ENCODE measurements at regions of chr2 and their contacts with region 1.

Region 1: GRCh38 chr2:44927985-44928482 is 13.5 kb upstream of the SIX3 start:
- DNase-seq: no peak
- ATAC-seq: no peak
- H3K4me3 Mint-ChIP-seq: no peak overlapping the region
- H3K27ac Mint-ChIP-seq: no peak overlapping the region
- H3K4me1 Mint-ChIP-seq: peaks cover 17% of the 10 kb centered on the region
- H3K27me3 Mint-ChIP-seq: peaks cover 72% of the 10 kb centered on the region

Region 2: DNA sequence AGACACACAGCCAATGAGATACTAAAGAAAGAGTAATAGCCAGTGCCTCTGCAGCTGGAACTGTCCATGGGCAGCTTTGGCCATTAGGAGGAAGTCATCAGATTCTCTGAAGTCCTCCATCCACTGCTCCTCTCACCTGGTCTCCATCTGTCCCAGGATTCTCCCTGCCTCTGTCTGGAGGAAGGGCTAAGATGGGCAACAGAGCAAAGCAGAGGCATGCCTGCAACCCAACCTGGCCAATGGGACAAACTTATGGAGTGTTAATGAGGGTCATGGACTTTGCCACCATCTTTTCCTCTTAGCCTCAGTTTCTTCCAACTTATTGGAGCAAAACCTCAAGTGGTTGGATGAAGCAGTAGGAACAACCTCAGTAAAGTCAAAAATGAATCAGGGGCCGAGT is 78.0 kb before region 1 on chr2:
- CTCF ChIA-PET with region 1: no interaction called
- POLR2A ChIA-PET with region 1: no interaction called
- intact Hi-C with region 1: no loop called
- DNase-seq: no peak
- ATAC-seq: no peak
- H3K4me3 Mint-ChIP-seq: no peak overlapping the region
- H3K27ac Mint-ChIP-seq: no peak overlapping the region
- H3K4me1 Mint-ChIP-seq: peaks cover 3% of the 10 kb centered on the region
- H3K27me3 Mint-ChIP-seq: peaks cover 47% of the 10 kb centered on the region

Region 3: GRCh38 chr2:44941551-44942234 is 13.7 kb after region 1 on chr2 and contains the start of gene SIX3:
- CTCF ChIA-PET with region 1: interaction called, 4 read pairs
- POLR2A ChIA-PET with region 1: no interaction called
- intact Hi-C with region 1: loop called (anchors 2 kb)
- DNase-seq: peak; percentile 74
- ATAC-seq: peak; percentile 69
- H3K4me3 Mint-ChIP-seq: peak within 1 kb of the TSS; percentile 70
- H3K27ac Mint-ChIP-seq: no peak within 1 kb of the TSS
- H3K4me1 Mint-ChIP-seq: peaks cover 37% of the 10 kb centered on the region
- H3K27me3 Mint-ChIP-seq: peaks cover 76% of the 10 kb centered on the region
- total RNA-seq, gene SIX3: not detected